ENCODE measurements at regions of chr21 and their contacts with region 1.

Region 1: DNA sequence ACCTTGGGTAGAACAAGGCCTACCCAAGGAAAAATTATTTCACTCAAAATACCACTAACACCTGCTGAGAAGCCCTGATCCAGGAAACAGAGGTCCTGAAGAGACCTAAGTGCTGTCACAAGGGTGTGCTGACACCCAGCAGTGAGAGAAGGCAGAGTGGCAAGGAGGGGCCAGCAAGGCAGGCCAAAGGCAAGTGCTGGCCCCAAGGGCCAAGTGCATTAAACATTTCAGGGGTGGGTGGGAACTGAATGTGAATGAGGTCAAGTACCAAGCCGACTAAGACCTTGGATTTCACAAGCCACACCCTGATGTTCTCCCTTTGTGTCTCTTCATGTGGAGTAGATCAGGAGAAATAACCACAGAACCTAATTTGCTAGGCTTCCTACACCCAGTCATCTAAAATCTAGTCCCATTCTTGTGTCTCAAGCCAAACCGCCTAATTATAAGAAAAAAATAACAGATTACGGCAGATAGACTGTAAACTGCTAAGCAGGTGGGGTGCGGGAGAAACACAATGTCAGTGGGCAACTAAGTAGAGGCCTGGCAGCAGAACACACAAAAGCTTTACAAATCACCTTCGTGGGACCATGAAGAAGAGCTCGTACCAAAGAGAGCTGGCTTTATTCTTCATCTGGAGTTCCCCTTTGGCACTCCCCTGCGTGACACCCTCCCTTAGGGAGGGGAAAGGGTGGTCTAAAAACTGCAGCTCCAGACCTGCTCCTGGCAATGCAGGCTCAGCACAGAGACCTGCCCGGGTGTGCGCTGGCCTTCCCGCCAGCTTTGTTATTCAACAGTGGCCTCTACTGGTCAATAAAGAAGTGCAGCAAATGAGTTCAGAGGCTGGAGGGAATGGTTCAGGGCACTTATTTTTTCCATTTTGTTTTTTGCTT is 8.7 kb downstream of the UBE2G2 start:
- DNase-seq: peak; percentile 58 to 71 (median 67)
- H3K4me3 ChIP-seq: no peak overlapping the region
- H3K4me3 Mint-ChIP-seq: no peak overlapping the region
- H3K27ac ChIP-seq: no peak overlapping the region
- H3K27ac Mint-ChIP-seq: peak overlapping the region; percentile 29 to 80 (median 58)
- H3K4me1 ChIP-seq: peaks cover 9% of the 10 kb centered on the region
- H3K4me1 Mint-ChIP-seq: peaks cover 25 to 67% (median 38%) of the 10 kb centered on the region in 4 donors
- H3K27me3 ChIP-seq: no peaks in the 10 kb centered on the region
- H3K27me3 Mint-ChIP-seq: no peaks in the 10 kb centered on the region

Region 2: GRCh38 chr21:44492567-44493385 is 300.2 kb before region 1 on chr21:
- CTCF ChIA-PET with region 1: interaction called, 13 read pairs
- POLR2A ChIA-PET with region 1: no interaction called
- intact Hi-C with region 1: no loop called
- DNase-seq: no peak
- H3K4me3 ChIP-seq: no peak overlapping the region
- H3K4me3 Mint-ChIP-seq: no peak overlapping the region
- H3K27ac ChIP-seq: no peak overlapping the region
- H3K27ac Mint-ChIP-seq: peak overlapping the region in 1 of 7 donors; percentile 15
- H3K4me1 ChIP-seq: no peaks in the 10 kb centered on the region
- H3K4me1 Mint-ChIP-seq: no peaks in the 10 kb centered on the region
- H3K27me3 ChIP-seq: no peaks in the 10 kb centered on the region
- H3K27me3 Mint-ChIP-seq: peaks cover 20% of the 10 kb centered on the region in 2 donors

Region 3: DNA sequence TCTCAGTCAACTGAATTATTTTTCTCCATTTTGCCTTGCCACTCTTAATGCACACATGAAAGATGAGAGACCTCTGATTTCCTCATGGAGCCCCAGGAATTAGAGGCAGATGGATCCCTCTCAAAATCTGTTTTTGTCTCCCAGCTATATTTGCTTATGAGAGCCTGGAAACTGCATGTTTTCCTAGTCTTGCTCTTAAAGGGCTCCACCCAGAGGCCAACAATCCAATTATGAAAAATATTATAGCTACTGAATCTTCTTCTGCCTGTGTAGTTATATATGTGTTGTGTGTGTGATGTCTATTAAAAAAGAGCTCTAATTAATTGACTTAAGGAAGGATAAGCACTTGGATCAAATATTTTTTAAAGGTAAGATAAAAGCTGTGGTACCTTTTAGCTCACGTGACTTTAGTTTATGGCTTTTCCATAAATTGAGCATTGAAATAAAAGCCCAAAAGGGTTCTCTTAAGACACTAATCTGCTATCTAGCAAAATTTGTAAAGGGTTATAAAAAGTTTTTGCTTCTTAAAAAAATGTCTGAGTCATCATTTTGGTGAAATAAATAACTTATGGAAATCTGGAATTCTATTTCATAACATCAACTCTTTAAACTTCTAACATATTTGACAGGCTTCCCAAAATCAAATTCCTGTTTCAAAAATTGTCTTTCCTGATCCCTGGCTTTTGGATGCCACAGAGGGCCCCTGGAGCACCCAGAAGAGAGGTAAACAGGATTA is 50.4 kb before region 1 on chr21:
- CTCF ChIA-PET with region 1: interaction called, 36 read pairs
- POLR2A ChIA-PET with region 1: no interaction called
- intact Hi-C with region 1: loop called (anchors 1 kb)
- DNase-seq: peak in 4 of 5 donors; percentile 40 to 54 (median 47)
- H3K4me3 ChIP-seq: no peak overlapping the region
- H3K4me3 Mint-ChIP-seq: no peak overlapping the region
- H3K27ac ChIP-seq: no peak overlapping the region
- H3K27ac Mint-ChIP-seq: peak overlapping the region in 4 of 7 donors; percentile 48 to 83 (median 79)
- H3K4me1 ChIP-seq: no peaks in the 10 kb centered on the region
- H3K4me1 Mint-ChIP-seq: peaks cover 4 to 12% (median 4%) of the 10 kb centered on the region in 4 donors
- H3K27me3 ChIP-seq: no peaks in the 10 kb centered on the region
- H3K27me3 Mint-ChIP-seq: peaks cover 0 to under 1% of the 10 kb centered on the region in 2 donors

Region 4: GRCh38 chr21:45179568-45180245 is 386.8 kb after region 1 on chr21:
- CTCF ChIA-PET with region 1: no interaction called
- POLR2A ChIA-PET with region 1: no interaction called
- intact Hi-C with region 1: no loop called
- DNase-seq: no peak
- H3K4me3 ChIP-seq: no peak overlapping the region
- H3K4me3 Mint-ChIP-seq: no peak overlapping the region
- H3K27ac ChIP-seq: no peak overlapping the region
- H3K27ac Mint-ChIP-seq: peak overlapping the region in 1 of 7 donors; percentile 73
- H3K4me1 ChIP-seq: no peaks in the 10 kb centered on the region
- H3K4me1 Mint-ChIP-seq: peaks cover 0 to 6% (median under 1%) of the 10 kb centered on the region in 4 donors
- H3K27me3 ChIP-seq: no peaks in the 10 kb centered on the region
- H3K27me3 Mint-ChIP-seq: no peaks in the 10 kb centered on the region